K562 (cell line): ENCODE measurements at regions of chr12 and their contacts with region 1.

Region 1: GRCh38 chr12:2057041-2057794 is 4.4 kb downstream of the CACNA1C start:
- DNase-seq: peak; percentile 47 to 59 (median 56)
- ATAC-seq: peak; percentile 86
- H3K4me3 ChIP-seq: no peak overlapping the region
- H3K27ac ChIP-seq: no peak overlapping the region
- H3K4me1 ChIP-seq: no peaks in the 10 kb centered on the region
- H3K27me3 ChIP-seq: peaks cover 0 to 28% of the 10 kb centered on the region in 2 experiments; a peak in 3 of 5 replicates
- CTCF ChIP-seq: peak; percentile 70 to 80 (median 72)
- EP300 ChIP-seq: no peak
- POLR2A ChIP-seq: no peak
- RAD21 ChIP-seq: peak; percentile 48 to 73

Region 2: GRCh38 chr12:2075508-2076195 is 18.4 kb after region 1 on chr12:
- CTCF ChIA-PET with region 1: no interaction called
- POLR2A ChIA-PET with region 1: no interaction called
- in situ Hi-C with region 1: no loop called
- intact Hi-C with region 1: no loop called
- DNase-seq: no peak
- ATAC-seq: no peak
- H3K4me3 ChIP-seq: no peak overlapping the region
- H3K27ac ChIP-seq: no peak overlapping the region
- H3K4me1 ChIP-seq: no peaks in the 10 kb centered on the region
- H3K27me3 ChIP-seq: peaks cover 0 to 4% of the 10 kb centered on the region in 2 experiments; a peak in 1 of 5 replicates
- CTCF ChIP-seq: no peak
- EP300 ChIP-seq: no peak
- POLR2A ChIP-seq: no peak
- RAD21 ChIP-seq: no peak

Region 3: GRCh38 chr12:2284857-2285256 is 227.6 kb after region 1 on chr12:
- CTCF ChIA-PET with region 1: no interaction called
- POLR2A ChIA-PET with region 1: no interaction called
- in situ Hi-C with region 1: loop called (anchors 25 kb)
- intact Hi-C with region 1: loop called (anchors 5 kb)
- DNase-seq: peak; percentile 9 to 27 (median 20)
- ATAC-seq: peak; percentile 85
- H3K4me3 ChIP-seq: no peak overlapping the region
- H3K27ac ChIP-seq: no peak overlapping the region
- H3K4me1 ChIP-seq: no peaks in the 10 kb centered on the region
- H3K27me3 ChIP-seq: peaks cover 8 to 33% of the 10 kb centered on the region in 2 experiments; a peak in 3 of 5 replicates
- CTCF ChIP-seq: peak; percentile 36 to 48 (median 40); a peak in 4 of 6 replicates
- EP300 ChIP-seq: no peak
- POLR2A ChIP-seq: no peak
- RAD21 ChIP-seq: 0 out of 4 replicates have a peak, but pooled peaks of 1 of the 2 experiments have one; percentile 31

Region 4: GRCh38 chr12:2583091-2583497 is 525.9 kb after region 1 on chr12:
- CTCF ChIA-PET with region 1: no interaction called
- POLR2A ChIA-PET with region 1: no interaction called
- in situ Hi-C with region 1: loop called (anchors 10 kb)
- intact Hi-C with region 1: loop called (anchors 5 kb)
- DNase-seq: peak; percentile 61 to 76 (median 70)
- ATAC-seq: peak; percentile 99
- H3K4me3 ChIP-seq: no peak overlapping the region
- H3K27ac ChIP-seq: no peak overlapping the region
- H3K4me1 ChIP-seq: peaks cover 0 to 5% of the 10 kb centered on the region in 2 experiments; a peak in 2 of 5 replicates
- H3K27me3 ChIP-seq: peaks cover 0 to 26% of the 10 kb centered on the region in 2 experiments; a peak in 2 of 5 replicates
- CTCF ChIP-seq: peak; percentile 70 to 83 (median 72)
- EP300 ChIP-seq: no peak
- POLR2A ChIP-seq: no peak
- RAD21 ChIP-seq: peak; percentile 65 to 84